Prostate gland (tissue), 2 donors: ENCODE measurements at regions of chr6 and their contacts with region 1.

Region 1: GRCh38 chr6:2841264-2842138 is at the start of gene SERPINB1:
- DNase-seq: peak; percentile 63
- H3K4me3 ChIP-seq: peak within 1 kb of the TSS; percentile 36 to 41
- H3K27ac ChIP-seq: peak within 1 kb of the TSS; percentile 82 to 85
- H3K4me1 ChIP-seq: peaks cover 7% of the 10 kb centered on the region
- H3K27me3 ChIP-seq: no peaks in the 10 kb centered on the region
- CTCF ChIP-seq: no peak
- POLR2A ChIP-seq: peak; percentile 60
- total RNA-seq, gene SERPINB1: 27.5 to 31.1 TPM

Region 2: GRCh38 chr6:2791124-2791974 is 50.2 kb before region 1 on chr6:
- intact Hi-C with region 1: loop called (anchors 2 kb)
- DNase-seq: peak; percentile 40
- H3K4me3 ChIP-seq: no peak overlapping the region
- H3K27ac ChIP-seq: peak overlapping the region; percentile 43 to 51
- H3K4me1 ChIP-seq: no peaks in the 10 kb centered on the region
- H3K27me3 ChIP-seq: no peaks in the 10 kb centered on the region
- CTCF ChIP-seq: peak; percentile 25 to 86 (median 64)
- POLR2A ChIP-seq: no peak

Region 3: GRCh38 chr6:3356056-3356761 is 514.7 kb after region 1 on chr6:
- intact Hi-C with region 1: no loop called
- DNase-seq: peak; percentile 88
- H3K4me3 ChIP-seq: peak overlapping the region; percentile 13 to 22
- H3K27ac ChIP-seq: peak overlapping the region; percentile 94
- H3K4me1 ChIP-seq: peaks cover 26% of the 10 kb centered on the region
- H3K27me3 ChIP-seq: no peaks in the 10 kb centered on the region
- CTCF ChIP-seq: no peak
- POLR2A ChIP-seq: no peak